K562 (cell line): ENCODE measurements at regions of chr4 and their contacts with region 1.

Region 1: GRCh38 chr4:81040012-81040659 is 9.6 kb downstream of the BMP3 start:
- DNase-seq: peak; percentile 9 to 31 (median 16)
- ATAC-seq: peak; percentile 47; the same call in 1 of the 3 replicates
- H3K4me3 ChIP-seq: no peak overlapping the region
- H3K27ac ChIP-seq: no peak overlapping the region
- H3K4me1 ChIP-seq: no peaks in the 10 kb centered on the region
- H3K27me3 ChIP-seq: no peaks in the 10 kb centered on the region
- CTCF ChIP-seq: peak; percentile 41 to 84 (median 65); a peak in 5 of 6 replicates
- EP300 ChIP-seq: no peak
- POLR2A ChIP-seq: no peak
- RAD21 ChIP-seq: peak; percentile 75 to 81

Region 2: GRCh38 chr4:80566203-80566872 is 473.8 kb before region 1 on chr4:
- CTCF ChIA-PET with region 1: no interaction called
- POLR2A ChIA-PET with region 1: no interaction called
- in situ Hi-C with region 1: no loop called
- intact Hi-C with region 1: no loop called
- DNase-seq: no peak
- ATAC-seq: no peak
- H3K4me3 ChIP-seq: no peak overlapping the region
- H3K27ac ChIP-seq: no peak overlapping the region
- H3K4me1 ChIP-seq: no peaks in the 10 kb centered on the region; a peak in 1 of 5 replicates
- H3K27me3 ChIP-seq: no peaks in the 10 kb centered on the region
- CTCF ChIP-seq: no peak
- EP300 ChIP-seq: no peak
- POLR2A ChIP-seq: no peak
- RAD21 ChIP-seq: no peak

Region 3: DNA sequence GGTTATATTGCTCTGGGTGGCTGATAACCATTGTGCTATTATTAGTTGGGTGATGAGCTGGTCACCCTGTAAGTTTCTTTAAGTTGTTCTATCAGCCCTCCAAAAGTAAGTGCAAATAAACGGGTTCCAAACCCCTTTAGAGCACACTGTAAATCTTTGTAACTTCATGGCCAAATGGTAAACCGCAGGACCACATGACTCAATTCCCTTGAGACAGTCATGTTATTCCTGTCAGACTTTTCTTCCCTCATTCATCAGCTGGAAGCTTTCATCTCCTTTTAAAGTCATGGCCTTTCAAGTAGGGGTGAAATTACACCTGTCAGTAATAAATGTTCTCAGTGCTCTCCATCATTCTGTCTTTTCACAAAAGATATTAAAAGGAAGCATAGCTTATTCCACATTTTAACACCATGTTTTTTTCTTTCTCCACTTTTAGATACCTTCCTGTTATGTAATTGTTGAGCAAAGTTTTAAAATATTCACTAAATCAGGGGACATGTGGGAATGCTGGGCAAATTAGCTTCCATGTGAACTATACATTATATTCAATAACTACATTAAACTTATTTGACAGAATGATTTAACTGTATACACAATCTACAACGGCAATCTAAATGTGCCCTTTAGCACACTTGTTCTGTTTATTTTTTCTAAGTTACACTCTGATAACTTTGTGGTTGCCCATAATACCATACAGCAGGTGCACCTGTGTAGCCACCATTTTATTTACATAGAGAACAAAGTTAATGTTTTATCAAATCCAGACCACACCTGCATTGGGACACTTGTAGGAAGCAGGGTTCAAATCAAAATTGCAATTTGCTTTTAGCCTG is 429.1 kb before region 1 on chr4:
- CTCF ChIA-PET with region 1: no interaction called
- POLR2A ChIA-PET with region 1: no interaction called
- in situ Hi-C with region 1: no loop called
- intact Hi-C with region 1: loop called (anchors 10 kb)
- DNase-seq: no peak
- ATAC-seq: no peak
- H3K4me3 ChIP-seq: no peak overlapping the region
- H3K27ac ChIP-seq: no peak overlapping the region
- H3K4me1 ChIP-seq: no peaks in the 10 kb centered on the region
- H3K27me3 ChIP-seq: no peaks in the 10 kb centered on the region
- CTCF ChIP-seq: no peak
- EP300 ChIP-seq: no peak
- POLR2A ChIP-seq: no peak
- RAD21 ChIP-seq: no peak